GM10248 (cell line): ENCODE measurements at regions of chr7 and their contacts with region 1.

Region 1: GRCh38 chr7:70752794-70753241 is 379.1 kb upstream of the GALNT17 start:
- DNase-seq: no peak
- CTCF ChIP-seq: no peak

Region 2: DNA sequence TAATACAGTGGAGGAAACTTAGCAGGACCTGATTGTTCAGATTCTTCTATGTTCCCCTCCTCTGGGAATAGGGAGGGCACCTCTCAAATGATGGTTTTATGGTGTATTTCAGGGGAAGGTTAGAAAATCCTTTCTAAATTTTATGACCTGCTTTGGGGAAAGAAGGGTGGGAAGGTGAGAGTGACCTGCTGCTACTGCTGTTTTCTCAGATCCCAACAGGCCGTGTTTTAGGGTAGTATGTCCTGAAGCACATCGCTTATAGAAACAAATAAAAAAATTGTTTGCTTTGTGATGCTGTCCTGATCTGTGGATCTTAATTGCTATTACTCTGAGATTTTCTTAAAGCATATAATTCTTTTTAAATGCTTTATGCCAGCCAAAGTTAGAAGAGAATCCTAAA is 24.9 kb before region 1 on chr7:
- CTCF ChIA-PET with region 1: no interaction called
- POLR2A ChIA-PET with region 1: no interaction called
- DNase-seq: no peak
- CTCF ChIP-seq: no peak

Region 3: DNA sequence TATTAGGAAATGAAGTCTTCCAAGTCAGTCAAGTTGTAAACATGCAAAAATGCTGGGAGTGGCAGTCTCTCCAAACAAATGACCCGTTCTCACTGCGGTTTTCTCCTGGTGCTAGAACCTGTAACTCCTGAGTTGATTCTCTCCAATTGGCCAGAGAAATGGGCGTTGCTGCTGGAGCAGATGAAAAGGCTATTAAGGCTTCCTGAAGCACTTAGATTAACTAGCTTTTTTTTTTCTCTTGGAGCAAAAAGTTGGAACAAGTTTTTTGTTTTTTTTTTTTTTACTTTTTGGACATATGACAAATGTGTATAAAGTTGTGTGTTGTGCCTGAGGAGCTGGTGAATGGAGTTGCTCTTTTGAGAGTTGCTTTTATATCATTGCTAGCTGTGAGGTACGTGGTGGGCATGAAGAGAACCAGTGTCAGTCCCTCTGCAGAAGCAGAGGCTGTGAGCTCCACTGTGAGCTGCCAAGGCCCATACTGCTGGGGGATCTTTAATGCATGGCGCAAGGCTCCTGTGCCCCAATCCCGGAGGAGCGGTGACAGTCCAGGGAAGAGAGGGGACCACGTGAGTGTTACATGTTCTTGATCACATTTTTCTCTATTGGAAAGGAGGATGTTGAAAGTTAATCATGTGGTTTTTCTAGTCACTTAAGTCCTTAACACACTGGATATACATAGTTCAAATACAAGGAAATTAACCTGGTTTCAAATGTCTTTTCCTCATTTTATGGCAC is 14.5 kb before region 1 on chr7:
- CTCF ChIA-PET with region 1: interaction called, 18 read pairs
- POLR2A ChIA-PET with region 1: no interaction called
- DNase-seq: no peak
- CTCF ChIP-seq: no peak

Region 4: DNA sequence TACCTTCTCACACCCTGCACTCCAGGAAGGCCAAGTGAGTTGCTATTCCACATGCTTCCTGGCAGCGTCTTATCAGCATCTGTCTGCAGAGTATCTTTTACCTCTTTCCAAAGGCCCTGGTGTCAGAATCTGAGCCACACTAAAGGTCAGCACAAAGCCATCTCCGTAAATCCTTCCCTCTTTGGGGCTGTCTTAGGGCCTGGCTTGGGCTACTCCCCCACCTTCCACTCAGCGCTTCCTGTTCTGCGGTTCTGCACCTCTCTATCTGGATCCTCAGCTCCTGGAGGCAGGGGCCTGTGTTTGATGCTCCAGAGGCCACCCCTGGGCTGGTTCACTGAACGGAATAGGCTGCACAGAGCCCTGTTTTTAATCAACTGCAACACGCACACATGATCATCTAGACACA is 44.3 kb after region 1 on chr7:
- CTCF ChIA-PET with region 1: no interaction called
- POLR2A ChIA-PET with region 1: no interaction called
- DNase-seq: no peak
- CTCF ChIP-seq: no peak